Thyroid gland (tissue), 4 donors: ENCODE measurements at regions of chr12 and their contacts with region 1.

Region 1: DNA sequence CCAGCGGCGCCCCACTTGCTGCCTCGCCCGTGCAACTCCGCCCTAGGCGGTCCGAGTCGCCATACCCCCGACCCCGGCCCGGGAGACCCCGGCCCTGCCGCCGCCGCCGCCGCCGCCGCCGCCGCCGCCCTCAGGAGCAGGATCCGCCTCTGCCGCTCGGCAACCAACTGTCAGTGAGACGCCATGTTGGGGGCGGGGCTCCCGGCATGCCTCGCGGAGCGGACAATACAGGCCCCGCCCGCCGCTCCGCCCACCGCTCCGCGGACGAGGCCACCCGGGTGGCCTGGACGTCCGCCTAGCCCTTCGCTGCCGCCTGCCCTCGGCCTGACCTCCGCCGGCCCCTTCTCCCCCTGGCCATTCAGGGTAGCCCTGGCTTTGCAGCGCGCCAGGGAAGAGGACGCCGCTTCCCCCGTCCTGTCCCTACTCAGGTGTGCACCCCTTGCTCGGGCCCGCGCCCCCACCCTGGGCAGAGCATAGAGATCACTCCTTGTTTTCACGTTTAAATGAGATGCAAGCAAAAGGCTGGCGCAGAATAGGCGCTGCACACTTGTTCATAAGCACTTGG is at the start of gene HECTD4:
- DNase-seq: peak; percentile 97 to 98
- H3K4me3 ChIP-seq: peak within 1 kb of the TSS; percentile 8 to 85 (median 76)
- H3K27ac ChIP-seq: peak within 1 kb of the TSS; percentile 76 to 88 (median 82)
- H3K4me1 ChIP-seq: peaks cover 5 to 17% of the 10 kb centered on the region in 2 donors
- H3K27me3 ChIP-seq: no peaks in the 10 kb centered on the region
- CTCF ChIP-seq: peak in 1 of 6 experiments; percentile 4
- POLR2A ChIP-seq: peak in 1 of 2 donors; percentile 95
- total RNA-seq, gene HECTD4: 68.5 to 115 (median 79.6) TPM

Region 2: GRCh38 chr12:111624540-111624939 is 757.8 kb before region 1 on chr12:
- intact Hi-C with region 1: no loop called
- DNase-seq: no peak
- H3K4me3 ChIP-seq: no peak overlapping the region
- H3K27ac ChIP-seq: no peak overlapping the region
- H3K4me1 ChIP-seq: no peaks in the 10 kb centered on the region
- H3K27me3 ChIP-seq: no peaks in the 10 kb centered on the region
- CTCF ChIP-seq: no peak
- POLR2A ChIP-seq: no peak

Region 3: GRCh38 chr12:112196196-112196875 is 186.0 kb before region 1 on chr12:
- intact Hi-C with region 1: loop called (anchors 2 kb)
- DNase-seq: peak; percentile 20 to 37
- H3K4me3 ChIP-seq: no peak overlapping the region
- H3K27ac ChIP-seq: peak overlapping the region in 1 of 3 donors; percentile 5
- H3K4me1 ChIP-seq: peaks cover 0 to 3% of the 10 kb centered on the region in 2 donors
- H3K27me3 ChIP-seq: no peaks in the 10 kb centered on the region
- CTCF ChIP-seq: no peak
- POLR2A ChIP-seq: no peak

Region 4: DNA sequence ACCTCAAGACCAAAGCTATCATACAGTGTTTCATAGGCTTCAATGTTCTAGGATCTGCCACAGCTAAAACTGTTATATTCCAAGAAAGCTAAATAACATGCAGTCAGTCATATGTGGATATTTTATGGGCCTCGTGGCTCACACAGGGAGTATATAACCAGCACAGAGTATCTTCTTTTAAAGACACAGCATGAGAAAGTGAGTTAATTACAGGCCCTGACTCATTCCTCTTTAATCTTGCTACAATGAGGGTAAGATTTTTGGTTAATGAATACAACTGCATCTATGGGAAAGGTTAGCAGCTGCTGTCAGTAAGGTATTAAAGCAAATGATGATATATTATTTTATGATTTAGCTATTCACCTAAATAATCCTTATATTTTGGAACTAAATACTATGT is 145.9 kb before region 1 on chr12:
- intact Hi-C with region 1: loop called (anchors 10 kb)
- DNase-seq: no peak
- H3K4me3 ChIP-seq: no peak overlapping the region
- H3K27ac ChIP-seq: no peak overlapping the region
- H3K4me1 ChIP-seq: peaks cover 18 to 31% of the 10 kb centered on the region in 2 donors
- H3K27me3 ChIP-seq: no peaks in the 10 kb centered on the region
- CTCF ChIP-seq: no peak
- POLR2A ChIP-seq: no peak

Region 5: GRCh38 chr12:112716099-112717093 is 334.1 kb after region 1 on chr12:
- intact Hi-C with region 1: no loop called
- DNase-seq: no peak
- H3K4me3 ChIP-seq: no peak overlapping the region
- H3K27ac ChIP-seq: no peak overlapping the region
- H3K4me1 ChIP-seq: no peaks in the 10 kb centered on the region
- H3K27me3 ChIP-seq: no peaks in the 10 kb centered on the region
- CTCF ChIP-seq: no peak
- POLR2A ChIP-seq: no peak